ENCODE measurements at regions of chr14 and their contacts with region 1.

Region 1: GRCh38 chr14:105490572-105491366 is at the start of gene TEDC1:
- DNase-seq: peak; percentile 100
- H3K4me3 ChIP-seq: peak within 1 kb of the TSS; percentile 60 to 67
- H3K27ac ChIP-seq: peak within 1 kb of the TSS; percentile 93 to 95
- H3K4me1 ChIP-seq: peaks cover 4% of the 10 kb centered on the region
- H3K27me3 ChIP-seq: peaks cover 4% of the 10 kb centered on the region
- CTCF ChIP-seq: peak; percentile 71 to 99 (median 92)
- POLR2A ChIP-seq: peak; percentile 72
- total RNA-seq, gene TEDC1: 7.5 to 8.9 TPM

Region 2: GRCh38 chr14:105369653-105370040 is 121.1 kb before region 1 on chr14:
- intact Hi-C with region 1: loop called (anchors 2 kb)
- DNase-seq: no peak
- H3K4me3 ChIP-seq: no peak overlapping the region
- H3K27ac ChIP-seq: no peak overlapping the region
- H3K4me1 ChIP-seq: no peaks in the 10 kb centered on the region
- H3K27me3 ChIP-seq: no peaks in the 10 kb centered on the region
- CTCF ChIP-seq: no peak
- POLR2A ChIP-seq: no peak

Region 3: DNA sequence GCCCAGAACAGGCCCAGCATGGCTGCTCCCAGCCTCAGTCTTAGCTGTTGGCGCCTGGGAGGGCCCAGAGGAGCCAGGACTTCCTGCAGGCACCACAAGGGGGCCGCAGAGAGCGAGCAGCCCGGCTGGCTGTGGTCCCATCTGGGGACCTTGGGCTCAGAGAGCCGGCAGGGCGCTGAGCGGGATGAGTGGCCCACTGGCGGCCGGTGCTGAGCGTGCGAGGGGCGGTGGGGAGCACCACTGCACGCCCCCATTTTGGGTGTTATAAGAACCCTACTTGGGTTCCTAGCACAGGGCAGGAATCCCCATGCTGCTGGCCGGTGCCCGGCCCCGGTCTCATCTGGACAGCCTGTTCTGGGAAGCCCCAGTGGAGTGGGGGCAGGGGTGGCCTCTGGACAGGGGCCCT is 42.1 kb before region 1 on chr14:
- intact Hi-C with region 1: loop called (anchors 5 kb)
- DNase-seq: peak; percentile 47
- H3K4me3 ChIP-seq: no peak overlapping the region
- H3K27ac ChIP-seq: no peak overlapping the region
- H3K4me1 ChIP-seq: no peaks in the 10 kb centered on the region
- H3K27me3 ChIP-seq: no peaks in the 10 kb centered on the region
- CTCF ChIP-seq: peak; percentile 76 to 90 (median 82)
- POLR2A ChIP-seq: no peak

Region 4: GRCh38 chr14:105527661-105528581 is 37.2 kb after region 1 on chr14:
- intact Hi-C with region 1: loop called (anchors 2 kb)
- DNase-seq: peak; percentile 69
- H3K4me3 ChIP-seq: peak overlapping the region; percentile 48 to 57
- H3K27ac ChIP-seq: peak overlapping the region; percentile 73 to 75
- H3K4me1 ChIP-seq: peaks cover 22% of the 10 kb centered on the region
- H3K27me3 ChIP-seq: no peaks in the 10 kb centered on the region
- CTCF ChIP-seq: peak; percentile 80 to 94 (median 90)
- POLR2A ChIP-seq: peak; percentile 19

Measured in prostate gland (tissue), 2 donors.